AG04450 (cell line): ENCODE measurements at regions of chr13 and their contacts with region 1.

Region 1: DNA sequence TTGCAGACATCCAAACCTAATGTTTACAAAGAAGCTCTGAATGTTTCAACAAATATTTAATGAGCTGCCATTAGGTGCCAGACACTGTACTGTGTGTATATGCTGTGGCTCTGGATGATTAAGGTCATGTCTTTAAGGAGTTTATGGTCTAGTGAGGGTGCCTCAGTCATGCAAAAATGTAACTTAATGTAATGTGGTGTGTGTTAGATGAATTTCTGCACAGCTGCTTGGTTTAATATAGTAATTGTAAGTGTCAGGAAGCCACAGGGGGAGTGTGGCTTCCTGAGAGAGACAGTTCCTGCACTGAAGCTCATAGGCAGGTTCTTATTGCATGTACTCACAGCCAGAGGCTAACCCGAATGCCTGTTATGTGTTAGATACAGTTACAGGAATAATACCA is 43.3 kb downstream of the SPATA13 start:
- DNase-seq: no peak
- H3K4me3 ChIP-seq: no peak overlapping the region
- H3K27ac ChIP-seq: no peak overlapping the region
- H3K27me3 ChIP-seq: no peaks in the 10 kb centered on the region
- CTCF ChIP-seq: no peak

Region 2: GRCh38 chr13:24141333-24141910 is 62.4 kb before region 1 on chr13:
- CTCF ChIA-PET with region 1: no interaction called
- POLR2A ChIA-PET with region 1: no interaction called
- DNase-seq: no peak
- H3K4me3 ChIP-seq: no peak overlapping the region
- H3K27ac ChIP-seq: no peak overlapping the region
- H3K27me3 ChIP-seq: no peaks in the 10 kb centered on the region
- CTCF ChIP-seq: no peak

Region 3: DNA sequence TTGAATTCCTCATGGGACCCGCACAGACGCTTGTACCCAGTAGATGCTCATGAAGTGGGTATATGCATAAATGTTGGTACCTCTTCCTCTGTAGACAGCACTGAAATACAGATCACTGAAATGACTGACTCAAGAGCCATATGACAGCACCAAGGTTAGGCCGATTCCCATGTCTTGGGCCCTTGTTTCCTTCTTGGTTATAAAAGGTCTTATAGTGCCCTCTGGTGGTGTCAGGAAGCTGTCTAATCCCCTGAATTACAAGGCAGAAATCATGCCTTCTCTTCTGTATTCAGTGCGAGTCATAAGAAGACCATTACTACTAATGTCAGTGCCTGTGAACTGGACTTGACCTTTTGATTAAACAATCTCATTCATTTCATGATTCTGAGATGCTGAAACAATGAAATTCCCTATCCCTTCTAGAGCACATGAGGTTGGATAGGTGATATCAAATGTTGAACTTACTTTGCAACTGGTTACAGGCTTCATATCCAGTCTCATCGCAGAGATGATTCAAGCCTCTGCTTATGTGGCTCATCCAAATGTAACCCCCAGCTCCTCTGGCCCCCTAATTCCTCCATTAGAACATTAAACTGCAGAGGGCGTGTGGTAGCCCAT is 16.4 kb after region 1 on chr13:
- CTCF ChIA-PET with region 1: interaction called, 11 read pairs
- POLR2A ChIA-PET with region 1: no interaction called
- DNase-seq: peak; percentile 61
- H3K4me3 ChIP-seq: no peak overlapping the region
- H3K27ac ChIP-seq: no peak overlapping the region
- H3K27me3 ChIP-seq: no peaks in the 10 kb centered on the region
- CTCF ChIP-seq: peak; percentile 73